Head of caudate nucleus (tissue), 42 donors: ENCODE measurements at regions of chr11 and their contacts with region 1.

Region 1: DNA sequence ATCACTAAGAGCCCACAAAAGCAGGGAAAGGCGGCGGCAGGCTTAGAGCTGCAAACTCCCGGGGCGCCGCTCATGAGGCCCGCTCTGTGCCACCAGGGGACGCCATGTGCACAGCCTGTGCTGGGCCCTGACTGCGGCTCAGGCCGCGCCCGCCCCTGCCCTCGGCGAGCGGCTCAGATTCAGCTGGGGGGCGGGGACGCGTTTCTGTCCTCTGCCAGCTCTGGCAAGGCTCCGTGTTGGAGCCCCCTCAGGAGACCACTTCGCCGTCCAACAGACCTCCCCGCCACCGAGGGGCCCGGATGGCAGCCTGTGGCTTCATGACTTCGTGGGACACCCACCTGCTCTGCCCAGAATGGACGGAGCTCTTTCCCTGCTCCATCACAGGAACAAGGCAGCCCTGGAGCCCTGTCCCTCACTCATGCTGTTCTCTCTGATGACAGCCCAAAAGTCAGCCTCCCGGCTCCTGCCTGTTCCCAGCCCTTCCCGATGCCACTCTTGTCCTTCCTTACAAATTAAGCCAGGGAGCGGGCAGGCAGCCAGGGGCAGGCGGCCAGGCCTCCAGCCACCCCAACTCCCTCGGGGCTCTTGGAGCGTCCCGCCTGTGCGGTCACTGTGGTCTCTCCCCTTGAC is 69.1 kb downstream of the NAT10 start:
- DNase-seq: peak; percentile 78 to 96 (median 90)

Region 2: DNA sequence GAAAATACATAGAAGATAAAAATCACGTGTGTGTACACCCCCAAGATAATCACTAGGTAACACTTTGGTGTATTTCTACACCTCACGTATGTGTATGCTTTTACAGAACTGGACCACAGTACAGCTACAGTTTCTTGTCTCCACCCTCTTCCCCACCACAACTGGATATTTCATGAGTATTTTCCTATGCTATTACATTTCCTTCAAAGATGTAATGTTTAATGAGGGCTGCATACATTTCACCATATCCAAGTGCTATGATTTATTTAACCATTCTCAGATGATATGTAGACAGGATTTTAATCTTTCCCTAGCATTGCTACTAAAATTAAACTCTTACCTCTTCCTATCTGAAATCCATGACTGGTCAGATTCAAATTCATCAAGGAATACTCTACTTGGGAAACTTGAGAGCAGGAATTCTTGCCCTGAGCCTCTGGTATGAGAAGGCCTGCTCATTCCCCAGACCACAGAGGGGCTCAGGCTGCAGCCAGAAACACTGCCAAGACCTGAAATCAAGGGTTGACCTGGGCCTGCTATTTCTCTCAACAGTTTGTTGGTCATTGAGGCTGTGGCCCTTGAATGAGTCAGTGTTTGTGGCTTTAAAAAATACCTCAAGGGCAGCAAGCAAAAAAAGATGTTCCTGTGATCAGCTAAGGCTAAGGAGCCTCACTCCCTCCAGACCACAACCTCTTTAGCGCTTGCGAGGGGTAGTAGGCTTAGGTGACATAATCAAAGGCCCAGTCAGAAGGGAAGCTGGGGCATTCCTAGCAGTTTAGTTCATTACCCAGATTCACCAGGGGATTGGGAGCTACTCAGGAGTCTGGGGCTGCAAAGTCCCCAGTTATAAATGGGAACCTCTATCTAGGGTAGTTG is 127.8 kb after region 1 on chr11:
- intact Hi-C with region 1: no loop called
- DNase-seq: no peak

Region 3: GRCh38 chr11:34357701-34358257 is 183.3 kb after region 1 on chr11 and contains the start of gene ABTB2:
- intact Hi-C with region 1: loop called (anchors 1 kb)
- DNase-seq: peak; percentile 96 to 99 (median 99)

Region 4: DNA sequence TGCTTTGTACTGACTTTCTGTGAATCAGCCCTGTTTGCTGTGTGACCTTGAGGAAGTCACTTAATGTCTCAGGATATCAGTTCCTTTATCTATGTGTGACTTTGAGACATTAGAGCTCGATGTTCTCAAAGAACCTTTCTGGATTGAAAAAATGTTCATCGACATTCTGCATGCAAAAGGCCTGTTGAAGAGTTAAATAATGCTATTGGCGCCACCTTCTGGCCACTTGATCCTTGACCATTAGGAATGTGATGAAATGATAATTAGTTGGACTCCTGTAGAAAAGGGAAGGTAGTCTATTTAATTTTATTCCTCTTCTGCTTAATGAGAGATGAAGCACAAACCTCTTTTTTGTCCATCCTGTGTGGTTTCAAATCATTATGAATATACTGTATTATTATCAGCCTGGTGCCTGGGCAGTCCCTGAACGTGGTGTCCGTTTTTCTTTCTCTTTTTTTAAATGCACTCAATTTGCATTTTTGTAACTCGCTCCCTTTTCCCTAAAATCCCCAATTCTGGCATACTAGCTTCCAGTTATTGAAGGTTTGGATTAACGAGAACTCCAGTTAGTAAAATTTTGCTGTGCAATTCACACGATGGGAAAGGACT is 318.4 kb after region 1 on chr11:
- intact Hi-C with region 1: loop called (anchors 5 kb)
- DNase-seq: peak in 37 of 42 donors; percentile 17 to 88 (median 61)